MCF 10A (cell line): ENCODE measurements at regions of chr3 and their contacts with region 1.

Region 1: GRCh38 chr3:64588380-64588779 is 99.4 kb downstream of the ADAMTS9 start:
- DNase-seq: no peak
- H3K4me3 Mint-ChIP-seq: no peak overlapping the region
- H3K27ac Mint-ChIP-seq: no peak overlapping the region
- H3K4me1 Mint-ChIP-seq: no peaks in the 10 kb centered on the region
- H3K27me3 Mint-ChIP-seq: no peaks in the 10 kb centered on the region
- CTCF ChIP-seq: no peak

Region 2: GRCh38 chr3:64575211-64575844 is 13.1 kb before region 1 on chr3:
- CTCF ChIA-PET with region 1: interaction called, 13 read pairs
- POLR2A ChIA-PET with region 1: no interaction called
- intact Hi-C with region 1: no loop called
- DNase-seq: peak; percentile 48
- H3K4me3 Mint-ChIP-seq: no peak overlapping the region
- H3K27ac Mint-ChIP-seq: no peak overlapping the region
- H3K4me1 Mint-ChIP-seq: peaks cover 9% of the 10 kb centered on the region
- H3K27me3 Mint-ChIP-seq: no peaks in the 10 kb centered on the region
- CTCF ChIP-seq: peak; percentile 50